BJ (cell line): ENCODE measurements at regions of chr11 and their contacts with region 1.

Region 1: GRCh38 chr11:12377824-12378593 is 638 bp downstream of the PARVA start:
- DNase-seq: no peak
- H3K4me3 ChIP-seq: peak overlapping the region; percentile 73
- H3K27me3 ChIP-seq: no peaks in the 10 kb centered on the region
- CTCF ChIP-seq: peak; percentile 5; the same call in 1 of the 2 replicates

Region 2: GRCh38 chr11:12316432-12316831 is 61.6 kb before region 1 on chr11:
- CTCF ChIA-PET with region 1: no interaction called
- POLR2A ChIA-PET with region 1: no interaction called
- DNase-seq: no peak
- H3K4me3 ChIP-seq: no peak overlapping the region
- H3K27me3 ChIP-seq: no peaks in the 10 kb centered on the region; the same call in 1 of the 2 replicates
- CTCF ChIP-seq: no peak

Region 3: DNA sequence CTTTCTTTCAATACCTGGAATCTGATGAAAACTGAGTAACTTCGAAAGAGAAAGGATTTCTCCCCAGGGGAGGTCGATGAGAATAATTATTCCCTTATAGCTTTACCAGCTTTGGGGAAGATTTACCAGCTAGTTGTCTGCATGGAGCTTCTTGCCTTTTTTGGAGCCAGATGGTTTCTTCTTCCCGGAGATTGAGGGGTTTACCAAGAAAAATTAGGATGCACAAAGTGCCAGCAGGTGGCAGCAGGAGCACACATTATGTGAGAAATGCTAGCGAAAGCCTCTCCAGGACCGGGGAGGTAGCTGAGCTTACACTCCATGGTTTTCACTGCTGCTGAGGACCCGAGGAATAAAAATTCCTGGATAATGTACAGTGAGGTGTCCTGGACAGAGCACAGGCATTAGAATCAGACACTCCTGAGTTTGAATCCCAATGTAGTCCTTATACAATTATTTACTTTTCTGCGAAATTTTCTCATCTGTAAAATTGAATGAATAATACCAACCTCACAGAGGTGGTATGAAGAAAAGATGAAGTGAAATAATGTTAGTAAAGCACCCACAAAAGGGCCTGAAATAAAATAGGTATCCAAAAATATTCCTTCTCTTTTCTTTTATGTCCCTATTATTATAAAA is 46.7 kb before region 1 on chr11:
- CTCF ChIA-PET with region 1: interaction called, 14 read pairs
- POLR2A ChIA-PET with region 1: no interaction called
- DNase-seq: peak; percentile 40
- H3K4me3 ChIP-seq: no peak overlapping the region
- H3K27me3 ChIP-seq: no peaks in the 10 kb centered on the region
- CTCF ChIP-seq: peak; percentile 69

Region 4: GRCh38 chr11:12361682-12362081 is 16.3 kb before region 1 on chr11:
- CTCF ChIA-PET with region 1: interaction called, 11 read pairs
- POLR2A ChIA-PET with region 1: interaction called, 3 read pairs
- DNase-seq: no peak
- H3K4me3 ChIP-seq: no peak overlapping the region
- H3K27me3 ChIP-seq: no peaks in the 10 kb centered on the region
- CTCF ChIP-seq: no peak